Panc1 (cell line): ENCODE measurements at regions of chr18 and their contacts with region 1.

Region 1: GRCh38 chr18:13868501-13869271 is 44.7 kb downstream of the MC5R start:
- DNase-seq: no peak
- ATAC-seq: peak; percentile 69; the same call in 1 of the 2 replicates
- H3K4me3 ChIP-seq: peak overlapping the region; percentile 9 to 32; a peak in 3 of 4 replicates
- H3K27ac ChIP-seq: no peak overlapping the region
- H3K4me1 ChIP-seq: no peaks in the 10 kb centered on the region
- H3K27me3 ChIP-seq: peaks cover 15% of the 10 kb centered on the region
- CTCF ChIP-seq: no peak

Region 2: DNA sequence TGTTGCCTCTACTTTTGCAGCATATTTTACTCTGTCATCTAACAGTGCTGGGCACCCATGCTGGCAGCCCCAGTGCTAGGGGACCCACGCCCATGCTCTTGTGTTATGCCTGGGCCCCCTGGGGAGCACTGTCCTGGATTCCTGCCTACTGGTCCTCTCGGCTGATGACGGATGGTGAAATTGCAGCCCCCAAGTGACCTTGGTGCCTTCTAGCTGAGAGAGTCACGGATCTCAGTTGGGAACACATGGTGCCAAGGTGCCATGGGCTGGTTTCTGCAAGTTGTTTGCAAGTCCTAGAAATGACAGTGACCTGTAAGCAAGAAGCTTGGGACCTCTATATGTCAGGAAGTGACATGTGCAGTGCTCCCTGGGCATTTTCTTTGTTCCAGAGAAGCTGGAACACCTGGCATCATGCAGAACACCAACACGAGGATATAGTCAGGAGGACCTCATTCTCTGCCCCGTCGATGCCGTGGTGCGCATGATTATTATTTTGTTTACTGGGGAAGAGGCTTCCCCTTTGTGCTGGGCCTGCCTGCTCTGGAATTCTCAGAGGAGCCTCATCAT is 462.6 kb before region 1 on chr18:
- CTCF ChIA-PET with region 1: no interaction called
- POLR2A ChIA-PET with region 1: no interaction called
- in situ Hi-C with region 1: no loop called
- intact Hi-C with region 1: no loop called
- DNase-seq: no peak
- ATAC-seq: no peak
- H3K4me3 ChIP-seq: no peak overlapping the region
- H3K27ac ChIP-seq: no peak overlapping the region
- H3K4me1 ChIP-seq: no peaks in the 10 kb centered on the region
- H3K27me3 ChIP-seq: peaks cover 6% of the 10 kb centered on the region
- CTCF ChIP-seq: no peak

Region 3: DNA sequence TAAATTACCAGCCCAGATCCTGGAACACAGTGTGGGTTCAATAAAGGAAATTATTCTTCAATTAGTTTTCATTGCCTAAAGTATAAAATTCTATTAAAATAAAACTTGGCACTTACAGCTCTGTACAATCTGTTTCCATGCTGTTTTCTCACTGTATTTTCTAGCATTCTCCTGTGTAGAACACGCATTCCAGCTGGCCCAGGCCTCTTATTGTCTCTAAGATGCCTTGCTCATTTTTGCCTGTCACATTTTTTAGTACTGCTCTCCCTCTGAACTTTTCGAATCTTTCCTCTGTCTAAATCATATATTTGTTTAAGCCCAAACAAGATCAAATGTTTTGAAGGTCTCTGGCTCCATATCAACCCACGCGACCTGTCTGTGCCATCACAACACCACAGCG is 25.8 kb after region 1 on chr18:
- CTCF ChIA-PET with region 1: no interaction called
- POLR2A ChIA-PET with region 1: interaction called, 16 read pairs
- in situ Hi-C with region 1: no loop called
- intact Hi-C with region 1: no loop called
- DNase-seq: no peak
- ATAC-seq: no peak
- H3K4me3 ChIP-seq: no peak overlapping the region
- H3K27ac ChIP-seq: no peak overlapping the region
- H3K4me1 ChIP-seq: no peaks in the 10 kb centered on the region
- H3K27me3 ChIP-seq: no peaks in the 10 kb centered on the region
- CTCF ChIP-seq: no peak